ENCODE measurements at regions of chr7 and their contacts with region 1.

Region 1: GRCh38 chr7:124856299-124856888 is 73.2 kb downstream of the POT1 start:
- DNase-seq: no peak
- H3K4me3 Mint-ChIP-seq: no peak overlapping the region
- H3K27ac Mint-ChIP-seq: no peak overlapping the region
- H3K4me1 Mint-ChIP-seq: peaks cover 8% of the 10 kb centered on the region
- H3K27me3 Mint-ChIP-seq: no peaks in the 10 kb centered on the region
- CTCF ChIP-seq: peak; percentile 18

Region 2: GRCh38 chr7:124032369-124033094 is 823.9 kb before region 1 on chr7 and contains the start of gene TMEM229A:
- CTCF ChIA-PET with region 1: no interaction called
- intact Hi-C with region 1: no loop called
- DNase-seq: peak; percentile 47
- H3K4me3 Mint-ChIP-seq: peak within 1 kb of the TSS; percentile 98
- H3K27ac Mint-ChIP-seq: no peak within 1 kb of the TSS
- H3K4me1 Mint-ChIP-seq: peaks cover 14% of the 10 kb centered on the region
- H3K27me3 Mint-ChIP-seq: peaks cover 64% of the 10 kb centered on the region
- CTCF ChIP-seq: no peak
- total RNA-seq, gene TMEM229A: not detected in 2 replicates

Region 3: GRCh38 chr7:124101173-124101768 is 755.1 kb before region 1 on chr7:
- CTCF ChIA-PET with region 1: no interaction called
- intact Hi-C with region 1: loop called (anchors 2 kb)
- DNase-seq: peak; percentile 43
- H3K4me3 Mint-ChIP-seq: no peak overlapping the region
- H3K27ac Mint-ChIP-seq: no peak overlapping the region
- H3K4me1 Mint-ChIP-seq: no peaks in the 10 kb centered on the region
- H3K27me3 Mint-ChIP-seq: peaks cover 58% of the 10 kb centered on the region
- CTCF ChIP-seq: peak; percentile 61

Region 4: DNA sequence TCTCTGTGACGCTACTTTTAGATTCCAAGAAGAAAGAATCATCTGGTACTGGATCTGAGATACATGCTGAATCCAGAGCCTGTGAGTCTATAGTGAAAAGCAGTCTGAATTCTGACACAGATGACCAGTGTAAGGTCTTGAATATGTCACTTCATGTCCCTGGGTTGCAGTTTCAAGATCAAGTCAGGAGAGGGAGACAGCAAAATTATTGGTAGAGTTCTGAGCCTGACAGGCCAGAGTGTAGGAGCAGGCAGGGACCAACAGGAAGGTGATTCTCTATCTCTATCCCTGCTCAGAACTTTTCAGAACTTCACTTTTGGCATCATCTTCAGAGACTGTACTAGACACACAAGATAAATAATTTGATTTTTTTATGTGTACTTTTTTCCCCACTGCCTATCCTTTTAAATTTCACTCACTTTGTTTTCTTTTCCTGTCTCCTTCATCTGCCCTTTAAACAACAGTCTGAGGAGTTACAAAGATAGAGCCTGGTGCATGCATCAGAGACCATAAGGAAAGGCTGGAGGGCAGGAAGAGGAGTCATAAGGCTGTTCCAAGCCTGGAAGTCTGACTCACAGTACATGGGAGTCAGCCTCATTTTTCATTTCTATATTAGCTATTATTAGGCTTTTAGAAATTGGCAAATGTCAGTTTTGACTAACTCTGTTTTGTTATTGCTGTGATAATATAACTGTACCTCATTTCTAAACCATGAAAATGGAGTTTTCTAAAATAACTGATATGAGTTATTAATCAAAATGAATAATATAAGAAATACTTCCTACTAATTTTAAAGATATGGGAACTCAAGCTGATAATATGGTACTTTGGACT is 703.3 kb before region 1 on chr7:
- CTCF ChIA-PET with region 1: no interaction called
- intact Hi-C with region 1: loop called (anchors 1 kb)
- DNase-seq: peak; percentile 41
- H3K4me3 Mint-ChIP-seq: no peak overlapping the region
- H3K27ac Mint-ChIP-seq: no peak overlapping the region
- H3K4me1 Mint-ChIP-seq: no peaks in the 10 kb centered on the region
- H3K27me3 Mint-ChIP-seq: no peaks in the 10 kb centered on the region
- CTCF ChIP-seq: peak; percentile 56

Region 5: DNA sequence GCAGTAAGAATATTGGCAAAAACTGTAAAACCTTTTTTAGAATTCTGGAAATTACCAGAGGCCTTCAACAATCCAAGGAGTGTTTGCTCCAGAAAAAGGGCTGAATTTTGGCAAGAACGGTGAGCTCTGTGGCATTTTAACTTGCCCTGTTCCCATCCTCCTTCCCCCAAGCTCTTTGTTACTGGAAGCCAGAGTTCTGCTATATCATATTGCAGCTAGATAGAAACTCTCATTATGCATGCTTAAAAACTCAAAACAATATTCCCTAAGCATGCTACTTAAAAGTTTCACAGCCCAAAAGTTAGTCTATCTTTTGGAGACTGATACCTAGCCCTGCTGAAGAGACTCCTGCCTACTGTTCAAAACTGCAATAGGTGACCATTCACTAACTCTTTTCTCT is 20.2 kb before region 1 on chr7:
- CTCF ChIA-PET with region 1: no interaction called
- intact Hi-C with region 1: no loop called
- DNase-seq: no peak
- H3K4me3 Mint-ChIP-seq: no peak overlapping the region
- H3K27ac Mint-ChIP-seq: no peak overlapping the region
- H3K4me1 Mint-ChIP-seq: no peaks in the 10 kb centered on the region
- H3K27me3 Mint-ChIP-seq: no peaks in the 10 kb centered on the region
- CTCF ChIP-seq: no peak

Region 6: DNA sequence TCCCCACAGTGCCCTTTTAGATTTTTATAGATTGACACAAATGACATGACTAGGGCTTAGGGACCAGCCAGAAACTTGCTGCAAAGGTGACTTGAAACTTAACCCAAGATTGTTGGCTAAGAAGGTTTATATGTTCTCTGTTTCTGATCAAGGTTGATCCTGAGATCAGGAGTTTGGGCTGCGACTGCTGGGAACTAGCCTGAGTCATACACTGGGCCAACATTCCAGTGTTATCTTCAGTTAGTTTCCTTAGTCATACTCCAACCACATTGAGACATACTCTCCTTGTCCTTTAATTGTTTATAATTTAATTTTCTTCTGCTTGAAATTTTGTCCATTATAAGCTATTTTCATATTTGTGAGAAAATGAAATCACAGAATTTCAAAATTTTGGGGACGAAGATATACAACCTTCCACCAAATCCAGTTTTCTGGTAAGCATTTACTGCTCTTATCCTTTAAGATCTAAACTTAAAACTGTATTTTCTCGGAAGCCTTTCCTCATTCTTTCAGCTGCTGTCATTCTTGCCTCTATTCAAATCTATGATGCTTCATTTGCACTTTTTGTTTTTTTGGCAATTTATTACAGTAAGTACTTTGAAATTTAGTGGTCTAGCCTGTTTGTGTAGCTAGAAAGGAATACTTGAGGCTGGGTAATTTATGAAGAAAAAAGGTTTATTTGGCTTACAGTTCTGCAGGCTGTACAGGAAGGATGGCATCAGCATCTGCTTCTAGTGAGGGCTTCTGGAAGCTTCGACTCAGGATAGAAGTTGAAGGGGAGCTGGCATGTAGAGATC is 136.6 kb after region 1 on chr7:
- CTCF ChIA-PET with region 1: no interaction called
- intact Hi-C with region 1: loop called (anchors 5 kb)
- DNase-seq: peak; percentile 47
- H3K4me3 Mint-ChIP-seq: peak overlapping the region; percentile 54
- H3K27ac Mint-ChIP-seq: peak overlapping the region; percentile 98
- H3K4me1 Mint-ChIP-seq: peaks cover 19% of the 10 kb centered on the region
- H3K27me3 Mint-ChIP-seq: no peaks in the 10 kb centered on the region
- CTCF ChIP-seq: no peak

Region 7: GRCh38 chr7:125316466-125316865 is 460.1 kb after region 1 on chr7:
- CTCF ChIA-PET with region 1: no interaction called
- intact Hi-C with region 1: loop called (anchors 1 kb)
- DNase-seq: peak; percentile 65
- H3K4me3 Mint-ChIP-seq: no peak overlapping the region
- H3K27ac Mint-ChIP-seq: no peak overlapping the region
- H3K4me1 Mint-ChIP-seq: peaks cover 11% of the 10 kb centered on the region
- H3K27me3 Mint-ChIP-seq: no peaks in the 10 kb centered on the region
- CTCF ChIP-seq: peak; percentile 40